ENCODE measurements at regions of chr5 and their contacts with region 1.

Region 1: DNA sequence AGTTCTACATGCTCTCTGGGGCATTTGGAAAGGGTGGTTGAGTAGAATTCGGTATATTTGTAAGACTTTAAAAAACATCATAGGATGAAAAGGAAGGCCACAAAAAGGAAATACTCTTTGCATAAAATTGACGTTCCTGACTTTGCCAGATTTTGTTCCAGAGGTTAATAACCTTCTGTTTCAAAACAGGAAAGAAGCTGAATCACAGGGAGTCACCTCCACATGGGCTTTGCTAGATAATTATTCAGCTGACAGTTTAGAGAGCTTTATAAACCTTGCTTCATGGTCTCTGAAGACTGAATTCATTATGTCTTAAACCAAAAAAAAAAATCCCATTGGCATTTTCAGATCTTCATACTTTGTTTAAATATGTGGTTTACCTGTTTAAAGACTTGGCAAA is 203.7 kb downstream of the SEMA6A start:
- DNase-seq: no peak
- ATAC-seq: no peak
- H3K4me3 ChIP-seq: no peak overlapping the region
- H3K27ac ChIP-seq: no peak overlapping the region
- H3K4me1 ChIP-seq: peaks cover 0 to 17% of the 10 kb centered on the region in 2 experiments; a peak in 3 of 5 replicates
- H3K27me3 ChIP-seq: no peaks in the 10 kb centered on the region
- CTCF ChIP-seq: no peak
- EP300 ChIP-seq: no peak
- POLR2A ChIP-seq: no peak
- RAD21 ChIP-seq: no peak

Region 2: DNA sequence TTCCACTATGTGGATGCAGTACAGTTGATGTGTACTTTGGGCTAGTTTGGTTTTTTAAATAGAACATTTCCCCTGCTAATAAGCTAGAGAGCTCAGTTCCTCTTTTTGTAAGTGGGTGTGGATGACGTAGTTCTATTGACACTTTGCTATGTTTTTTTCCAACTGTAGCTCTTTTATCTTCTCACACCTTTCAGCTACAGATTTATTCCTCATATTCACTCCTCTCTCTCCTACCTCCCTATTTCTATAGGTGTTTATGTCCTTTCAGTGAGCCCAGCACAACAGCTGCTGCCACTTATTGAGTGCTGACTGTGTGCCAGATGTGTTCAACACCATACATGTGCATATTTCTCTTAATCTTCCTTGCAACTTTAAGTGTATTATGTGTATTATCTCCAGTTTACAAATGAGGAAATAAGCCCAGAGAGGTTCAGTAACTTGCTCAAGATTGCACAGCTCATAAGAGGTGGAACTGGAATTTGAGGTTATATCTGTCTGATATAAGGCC is 11.9 kb before region 1 on chr5:
- CTCF ChIA-PET with region 1: no interaction called
- POLR2A ChIA-PET with region 1: interaction called, 11 read pairs
- in situ Hi-C with region 1: no loop called
- intact Hi-C with region 1: no loop called
- DNase-seq: peak in 1 of 4 experiments; percentile 20
- ATAC-seq: peak; percentile 77
- H3K4me3 ChIP-seq: no peak overlapping the region
- H3K27ac ChIP-seq: peak overlapping the region; percentile 63; the same call in 1 of the 3 replicates
- H3K4me1 ChIP-seq: peaks cover 13 to 24% of the 10 kb centered on the region in 2 experiments
- H3K27me3 ChIP-seq: no peaks in the 10 kb centered on the region
- CTCF ChIP-seq: no peak
- EP300 ChIP-seq: peak; percentile 62
- POLR2A ChIP-seq: no peak
- RAD21 ChIP-seq: no peak

Region 3: DNA sequence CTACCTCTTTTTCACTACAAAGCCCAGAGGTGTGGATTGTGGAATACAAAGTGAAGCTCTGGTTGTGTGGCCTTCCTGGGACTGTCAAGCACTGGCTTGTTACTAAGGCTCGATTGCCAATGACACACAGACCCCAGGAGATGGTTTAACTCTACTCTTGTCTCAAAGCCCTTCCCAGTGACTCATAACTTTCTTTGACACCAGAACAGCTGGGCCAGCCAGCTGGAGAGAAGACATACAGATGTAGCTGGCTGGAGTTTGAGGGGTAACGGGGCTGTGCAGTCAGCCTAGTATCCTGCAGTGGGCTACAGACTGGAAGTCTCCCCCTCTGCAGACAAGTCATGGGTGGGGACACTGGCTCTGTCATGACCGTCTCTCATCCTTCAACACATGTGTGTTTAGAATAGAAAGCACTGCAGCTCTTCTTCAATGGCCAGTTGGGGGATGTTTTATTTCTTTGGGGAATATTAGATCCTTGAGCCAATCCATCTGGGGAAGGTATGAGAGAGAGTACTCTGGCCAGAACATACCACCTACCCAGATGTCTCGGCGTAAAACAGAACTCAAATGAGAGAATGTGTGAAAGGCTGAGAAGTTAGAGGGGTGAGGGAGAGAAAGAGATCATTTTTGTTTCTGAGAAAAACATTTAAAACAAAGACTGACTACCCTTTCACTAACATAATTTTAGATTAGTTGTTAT is 150.4 kb after region 1 on chr5:
- CTCF ChIA-PET with region 1: no interaction called
- POLR2A ChIA-PET with region 1: no interaction called
- in situ Hi-C with region 1: no loop called
- intact Hi-C with region 1: no loop called
- DNase-seq: no peak
- ATAC-seq: no peak
- H3K4me3 ChIP-seq: no peak overlapping the region
- H3K27ac ChIP-seq: no peak overlapping the region
- H3K4me1 ChIP-seq: no peaks in the 10 kb centered on the region
- H3K27me3 ChIP-seq: no peaks in the 10 kb centered on the region
- CTCF ChIP-seq: no peak
- EP300 ChIP-seq: no peak
- POLR2A ChIP-seq: no peak
- RAD21 ChIP-seq: no peak